ENCODE measurements at regions of chr17 and their contacts with region 1.

Region 1: GRCh38 chr17:7972131-7972785 is 30.2 kb upstream of the GUCY2D start:
- DNase-seq: no peak
- H3K4me3 ChIP-seq: no peak overlapping the region
- CTCF ChIP-seq: no peak

Region 2: GRCh38 chr17:7956228-7956965 is 15.9 kb before region 1 on chr17:
- CTCF ChIA-PET with region 1: interaction called, 12 read pairs
- POLR2A ChIA-PET with region 1: no interaction called
- DNase-seq: no peak
- H3K4me3 ChIP-seq: no peak overlapping the region
- CTCF ChIP-seq: no peak

Region 3: DNA sequence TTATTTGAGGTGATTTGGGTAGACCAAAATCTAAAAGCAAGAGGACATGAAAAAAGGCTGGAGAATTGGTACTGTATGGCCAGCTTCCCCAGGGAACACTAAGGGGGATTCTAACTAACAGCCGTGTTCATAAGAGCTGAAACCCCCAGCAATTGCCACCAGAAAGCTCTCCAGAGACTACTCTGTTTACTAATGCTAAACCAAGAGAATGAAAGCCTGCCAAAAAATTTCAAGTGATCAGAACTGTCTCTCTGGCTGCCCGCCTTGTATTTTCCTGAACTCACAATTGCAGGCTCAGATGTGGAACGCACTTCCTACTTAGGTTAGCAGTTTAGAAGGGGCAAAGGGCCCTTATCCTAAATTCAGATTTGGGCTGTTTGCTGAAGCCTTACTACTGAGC is 634.1 kb after region 1 on chr17:
- CTCF ChIA-PET with region 1: no interaction called
- POLR2A ChIA-PET with region 1: no interaction called
- DNase-seq: no peak
- H3K4me3 ChIP-seq: no peak overlapping the region
- CTCF ChIP-seq: no peak

Measured in AG04449 (cell line).